HepG2 (cell line): ENCODE measurements at regions of chr5 and their contacts with region 1.

Region 1: DNA sequence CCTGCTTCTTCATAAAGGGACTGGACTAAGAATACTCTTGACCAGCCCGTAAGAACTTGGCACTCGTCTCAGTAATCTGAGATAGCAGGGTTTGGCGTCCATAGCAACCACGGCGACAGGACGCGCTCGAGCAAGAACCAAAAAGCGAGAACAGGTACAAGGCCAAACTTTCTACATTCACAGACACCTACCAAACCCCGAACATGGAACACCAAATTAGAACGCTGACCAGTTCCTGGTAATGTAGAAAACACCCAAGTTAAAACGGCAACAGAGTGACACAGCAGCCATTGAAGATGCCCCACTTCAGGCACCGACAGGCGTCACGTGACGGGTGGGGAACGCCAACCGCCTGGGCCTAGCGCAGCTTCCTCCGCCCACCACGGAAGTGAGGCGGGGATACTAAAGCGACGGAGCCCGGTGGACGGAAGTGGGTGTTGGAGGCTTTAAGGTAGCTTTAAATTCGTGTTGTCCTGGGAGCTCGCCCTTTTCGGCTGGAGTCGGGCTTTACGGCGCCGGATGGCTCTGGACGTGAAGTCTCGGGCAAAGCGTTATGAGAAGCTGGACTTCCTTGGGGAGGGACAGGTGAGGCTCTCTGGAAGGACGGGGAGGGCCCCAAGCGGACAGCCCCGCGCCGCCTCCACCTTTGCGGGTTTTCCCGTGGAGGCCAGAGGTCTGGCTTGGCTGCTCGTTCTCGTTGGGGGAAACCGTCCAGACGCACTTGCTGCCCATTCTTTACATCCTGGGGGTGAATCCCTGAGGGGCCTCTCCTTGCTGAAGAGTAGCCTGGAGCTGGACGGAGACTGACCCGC is at the start of gene CDK7:
- DNase-seq: peak; percentile 86
- ATAC-seq: peak; percentile 99
- H3K4me3 ChIP-seq: peak within 1 kb of the TSS; percentile 84 to 98 (median 98)
- H3K27ac ChIP-seq: peak within 1 kb of the TSS; percentile 84
- H3K4me1 ChIP-seq: peaks cover 36% of the 10 kb centered on the region
- H3K27me3 ChIP-seq: no peaks in the 10 kb centered on the region; a peak in 1 of 5 replicates
- CTCF ChIP-seq: 0 out of 2 replicates have a peak, but pooled peaks have one; percentile 24
- EP300 ChIP-seq: peak in 1 of 2 experiments; percentile 27; a peak in 1 of 4 replicates
- POLR2A ChIP-seq: peak; percentile 84 to 91
- RAD21 ChIP-seq: peak; percentile 31
- total RNA-seq, gene CDK7: 54.9 and 78.8 TPM in 2 replicates

Region 2: DNA sequence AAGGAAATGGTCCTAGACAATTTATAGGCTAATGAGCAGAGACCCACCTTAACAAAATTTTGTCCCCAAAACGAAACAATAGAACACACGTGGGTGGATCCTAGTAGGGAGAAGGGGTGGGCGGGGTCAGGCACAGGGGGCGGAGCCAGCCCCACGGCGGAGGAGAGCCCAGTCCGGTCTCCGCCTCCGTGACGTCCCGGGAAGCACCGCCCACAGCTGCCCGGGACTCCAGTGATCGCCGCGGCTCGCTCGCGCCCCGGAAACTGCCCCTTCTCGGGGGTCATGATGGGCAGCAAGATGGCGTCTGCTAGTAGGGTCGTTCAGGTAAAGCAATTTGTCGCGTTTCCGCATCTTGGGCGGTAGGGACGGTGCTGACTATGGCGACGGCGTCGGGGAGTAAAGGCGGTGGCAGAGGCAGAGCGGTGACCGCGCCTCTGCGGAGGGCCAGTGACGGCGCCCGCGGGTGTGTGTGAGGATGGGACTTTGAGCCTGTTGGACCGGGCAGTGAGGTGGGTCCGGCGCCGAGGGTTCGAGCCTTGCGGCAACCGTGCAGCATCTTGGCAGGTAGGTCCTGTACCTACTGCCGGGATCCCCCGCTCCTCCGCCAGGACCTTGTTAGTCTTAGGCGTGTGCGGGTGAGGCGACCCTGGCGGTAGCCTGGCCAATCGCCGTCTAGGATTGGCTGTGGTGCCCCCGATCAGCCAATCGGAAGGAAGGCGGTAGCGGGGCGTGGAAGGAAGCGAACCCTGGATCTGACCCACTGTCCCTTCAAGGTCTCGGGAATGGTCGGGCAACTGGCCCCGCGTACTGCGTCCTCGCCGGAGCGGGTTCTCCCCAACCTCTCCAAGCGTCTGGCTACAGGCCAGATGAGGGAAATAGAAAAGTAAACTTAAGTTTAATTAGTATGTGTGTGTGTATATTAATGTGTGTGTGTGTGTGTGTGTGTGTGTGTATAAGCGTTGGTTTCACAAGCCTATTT is 16.8 kb before region 1 on chr5:
- CTCF ChIA-PET with region 1: no interaction called
- POLR2A ChIA-PET with region 1: interaction called, 11 read pairs
- in situ Hi-C with region 1: no loop called
- intact Hi-C with region 1: no loop called
- DNase-seq: peak; percentile 88
- ATAC-seq: peak; percentile 96
- H3K4me3 ChIP-seq: peak overlapping the region; percentile 86 to 100 (median 97)
- H3K27ac ChIP-seq: peak overlapping the region; percentile 97
- H3K4me1 ChIP-seq: peaks cover 69% of the 10 kb centered on the region
- H3K27me3 ChIP-seq: no peaks in the 10 kb centered on the region; a peak in 1 of 5 replicates
- CTCF ChIP-seq: 0 out of 2 replicates have a peak, but pooled peaks have one; percentile 4
- EP300 ChIP-seq: no peak; a peak in 1 of 4 replicates
- POLR2A ChIP-seq: peak; percentile 86 to 93
- RAD21 ChIP-seq: peak; percentile 41; the same call in 1 of the 2 replicates